Activated CD8-positive, alpha-beta memory T cell treated with anti-CD3 and anti-CD28 coated beads, Interleukin-2, amount 10 ng/mL, durations not matched to agents 7 days and 5 days (primary cell): ENCODE measurements at regions of chr3 and their contacts with region 1.

Region 1: DNA sequence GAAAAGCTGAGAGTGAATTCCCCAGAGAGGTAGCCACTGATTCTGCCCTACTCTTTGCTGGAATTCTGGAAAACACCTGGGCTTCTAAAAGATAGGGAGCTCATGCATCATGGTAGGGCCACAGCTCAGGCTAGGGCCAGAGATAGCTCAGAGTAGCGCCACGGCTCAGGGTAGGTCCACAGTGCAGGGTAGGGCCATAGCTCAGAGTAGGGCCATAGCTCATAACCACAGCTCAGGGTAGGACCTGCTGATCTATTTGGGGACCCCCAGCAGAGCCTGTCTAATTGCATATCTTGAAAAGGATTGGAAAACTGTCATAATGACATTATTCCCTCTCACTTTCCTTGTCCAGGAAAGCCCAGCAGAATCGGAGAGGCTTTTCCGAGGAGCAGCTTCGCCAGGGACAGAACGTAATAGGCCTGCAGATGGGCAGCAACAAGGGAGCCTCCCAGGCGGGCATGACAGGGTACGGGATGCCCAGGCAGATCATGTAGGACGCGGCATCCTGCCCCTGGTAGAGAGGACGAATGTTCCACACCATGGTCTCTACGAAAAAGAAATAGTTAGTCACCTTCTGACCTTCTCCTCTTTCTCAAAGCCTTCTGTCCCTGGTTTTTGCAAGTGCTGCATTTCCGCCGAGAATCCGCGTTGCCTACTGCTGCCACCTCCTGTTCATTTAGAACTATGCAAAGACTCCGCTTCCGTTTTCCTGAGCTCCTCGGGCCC is 14.5 kb downstream of the TAGLN3 start:
- DNase-seq: peak; percentile 70
- ATAC-seq: peak; percentile 81
- H3K4me3 Mint-ChIP-seq: no peak overlapping the region
- H3K27ac Mint-ChIP-seq: no peak overlapping the region
- H3K4me1 Mint-ChIP-seq: peaks cover 13% of the 10 kb centered on the region
- H3K27me3 Mint-ChIP-seq: no peaks in the 10 kb centered on the region

Region 2: GRCh38 chr3:111717601-111718000 is 295.6 kb before region 1 on chr3:
- CTCF ChIA-PET with region 1: interaction called, 34 read pairs
- DNase-seq: peak; percentile 79
- ATAC-seq: peak; percentile 89
- H3K4me3 Mint-ChIP-seq: no peak overlapping the region
- H3K27ac Mint-ChIP-seq: no peak overlapping the region
- H3K4me1 Mint-ChIP-seq: peaks cover 7% of the 10 kb centered on the region
- H3K27me3 Mint-ChIP-seq: no peaks in the 10 kb centered on the region

Region 3: DNA sequence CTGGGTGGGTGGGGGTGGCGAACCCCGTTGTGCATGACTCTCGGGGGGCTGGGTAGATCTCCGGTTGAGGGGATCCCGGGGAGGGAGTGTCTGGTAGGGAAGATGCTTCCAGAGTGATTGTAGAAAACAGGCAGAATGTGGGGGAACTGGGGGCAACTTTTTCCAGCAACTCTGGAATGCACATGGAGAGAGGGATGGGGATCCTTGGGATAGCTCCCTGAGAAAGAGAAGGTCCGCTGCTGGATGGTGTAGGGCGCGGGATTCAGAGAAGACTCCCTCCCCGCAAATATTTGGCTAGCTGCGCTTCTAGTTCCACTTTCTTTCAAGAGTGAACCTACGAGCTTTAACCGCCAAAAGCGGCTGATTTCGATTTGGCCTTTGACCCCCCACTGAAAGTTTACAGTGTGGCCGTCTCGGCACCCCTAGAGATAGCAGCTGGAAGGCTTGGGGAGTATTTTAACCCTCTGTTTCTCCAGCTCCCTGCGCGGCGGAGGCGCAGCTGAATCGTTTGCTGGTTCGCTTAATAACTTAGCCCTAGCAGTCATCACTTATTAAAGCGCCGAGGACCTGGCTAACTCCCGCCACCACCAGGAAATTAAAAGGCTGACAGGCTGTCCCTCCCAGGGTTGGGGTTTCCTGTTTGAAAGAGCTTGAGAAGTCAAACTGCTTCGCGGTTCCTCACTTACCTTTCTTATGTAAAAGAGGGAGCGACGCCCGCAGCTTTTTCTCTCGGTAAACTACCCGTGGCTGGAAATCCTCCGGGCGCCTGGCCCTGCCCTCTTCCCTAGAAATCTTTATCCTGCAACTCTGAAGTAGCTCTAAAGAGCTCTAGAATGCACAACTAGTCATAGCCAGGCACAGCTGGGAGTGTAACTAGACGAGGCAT is 153.0 kb before region 1 on chr3:
- CTCF ChIA-PET with region 1: interaction called, 10 read pairs
- DNase-seq: peak; percentile 84
- ATAC-seq: peak; percentile 75
- H3K4me3 Mint-ChIP-seq: peak overlapping the region; percentile 91
- H3K27ac Mint-ChIP-seq: peak overlapping the region; percentile 77
- H3K4me1 Mint-ChIP-seq: peaks cover 16% of the 10 kb centered on the region
- H3K27me3 Mint-ChIP-seq: peaks cover 33% of the 10 kb centered on the region

Region 4: GRCh38 chr3:111989061-111989678 is 24.1 kb before region 1 on chr3:
- CTCF ChIA-PET with region 1: interaction called, 73 read pairs
- DNase-seq: no peak
- ATAC-seq: peak; percentile 80
- H3K4me3 Mint-ChIP-seq: no peak overlapping the region
- H3K27ac Mint-ChIP-seq: no peak overlapping the region
- H3K4me1 Mint-ChIP-seq: peaks cover 33% of the 10 kb centered on the region
- H3K27me3 Mint-ChIP-seq: no peaks in the 10 kb centered on the region

Region 5: GRCh38 chr3:112043603-112044201 is 30.5 kb after region 1 on chr3:
- CTCF ChIA-PET with region 1: interaction called, 14 read pairs
- DNase-seq: peak; percentile 66
- ATAC-seq: peak; percentile 96
- H3K4me3 Mint-ChIP-seq: no peak overlapping the region
- H3K27ac Mint-ChIP-seq: no peak overlapping the region
- H3K4me1 Mint-ChIP-seq: peaks cover 5% of the 10 kb centered on the region
- H3K27me3 Mint-ChIP-seq: no peaks in the 10 kb centered on the region